ENCODE measurements at regions of chr20 and their contacts with region 1.

Region 1: DNA sequence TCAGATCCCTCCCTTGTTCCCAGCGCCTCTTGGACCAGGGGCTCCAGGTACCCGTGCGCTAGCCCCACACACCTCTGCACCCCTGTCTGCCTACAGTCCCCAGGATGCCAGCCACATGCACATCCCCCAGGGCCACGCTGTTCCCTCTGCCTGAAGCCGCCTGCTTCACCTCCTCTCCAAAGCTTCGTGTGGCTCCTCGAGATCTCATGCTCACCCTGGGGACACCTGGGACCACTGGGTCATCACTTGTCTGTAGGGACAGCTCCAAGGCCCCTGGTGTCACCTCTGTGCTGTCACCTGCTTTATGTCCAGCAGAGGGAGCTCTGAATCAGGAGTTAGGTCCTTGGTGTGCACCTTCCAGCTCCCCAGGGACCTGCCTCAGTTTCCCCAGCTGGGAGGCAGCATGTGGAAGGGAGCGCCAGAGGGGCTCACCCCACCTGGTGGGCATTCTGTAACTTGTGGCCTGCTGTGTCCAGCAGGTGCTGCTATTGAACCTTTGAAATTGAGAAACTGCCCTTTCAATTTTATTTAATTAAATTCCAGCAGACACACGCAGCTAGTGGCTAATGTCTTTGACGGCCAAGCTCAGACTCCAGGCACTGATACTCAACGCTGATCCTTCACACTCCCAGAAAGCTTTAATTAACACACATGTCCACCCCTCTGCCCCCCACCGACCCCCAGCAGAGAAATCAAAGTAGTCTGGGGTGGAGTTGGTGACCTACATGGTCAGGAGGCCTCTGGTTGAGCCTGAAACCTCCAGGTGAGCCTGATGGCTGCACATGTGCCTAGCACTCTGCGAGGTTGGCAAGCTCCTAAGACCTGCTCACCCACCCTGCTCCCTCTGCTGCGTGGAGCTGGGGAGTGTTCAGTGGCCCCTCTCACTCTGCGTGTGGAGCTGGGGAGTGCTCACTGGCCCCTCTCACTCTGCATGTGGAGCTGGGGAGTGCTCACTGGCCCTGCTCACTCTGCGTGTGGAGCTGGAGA is 7.6 kb upstream of the YTHDF1 start:
- DNase-seq: peak; percentile 85
- H3K4me3 ChIP-seq: no peak overlapping the region
- H3K4me3 Mint-ChIP-seq: no peak overlapping the region
- H3K27ac Mint-ChIP-seq: no peak overlapping the region
- H3K4me1 ChIP-seq: peaks cover 12% of the 10 kb centered on the region; the same call in 1 of the 2 replicates
- H3K4me1 Mint-ChIP-seq: peaks cover 7% of the 10 kb centered on the region
- H3K27me3 ChIP-seq: no peaks in the 10 kb centered on the region
- H3K27me3 Mint-ChIP-seq: peaks cover 3% of the 10 kb centered on the region
- CTCF ChIP-seq: peak; percentile 96 to 99

Region 2: GRCh38 chr20:62524505-62524911 is 699.0 kb before region 1 on chr20:
- CTCF ChIA-PET with region 1: no interaction called
- POLR2A ChIA-PET with region 1: interaction called, 12 read pairs
- intact Hi-C with region 1: no loop called
- DNase-seq: no peak
- H3K4me3 ChIP-seq: no peak overlapping the region
- H3K4me3 Mint-ChIP-seq: no peak overlapping the region
- H3K27ac Mint-ChIP-seq: no peak overlapping the region
- H3K4me1 ChIP-seq: peaks cover 22% of the 10 kb centered on the region
- H3K4me1 Mint-ChIP-seq: peaks cover 13% of the 10 kb centered on the region
- H3K27me3 ChIP-seq: no peaks in the 10 kb centered on the region
- H3K27me3 Mint-ChIP-seq: no peaks in the 10 kb centered on the region
- CTCF ChIP-seq: no peak

Region 3: GRCh38 chr20:63241272-63241671 is 17.8 kb after region 1 on chr20:
- CTCF ChIA-PET with region 1: interaction called, 122 read pairs
- POLR2A ChIA-PET with region 1: no interaction called
- intact Hi-C with region 1: no loop called
- DNase-seq: no peak
- H3K4me3 ChIP-seq: no peak overlapping the region
- H3K4me3 Mint-ChIP-seq: no peak overlapping the region
- H3K27ac Mint-ChIP-seq: no peak overlapping the region
- H3K4me1 ChIP-seq: peaks cover 16% of the 10 kb centered on the region
- H3K4me1 Mint-ChIP-seq: no peaks in the 10 kb centered on the region
- H3K27me3 ChIP-seq: no peaks in the 10 kb centered on the region
- H3K27me3 Mint-ChIP-seq: no peaks in the 10 kb centered on the region
- CTCF ChIP-seq: no peak

Region 4: GRCh38 chr20:63261060-63261794 is 37.7 kb after region 1 on chr20:
- CTCF ChIA-PET with region 1: interaction called, 14 read pairs
- POLR2A ChIA-PET with region 1: no interaction called
- intact Hi-C with region 1: no loop called
- DNase-seq: peak; percentile 74 to 78
- H3K4me3 ChIP-seq: no peak overlapping the region
- H3K4me3 Mint-ChIP-seq: peak overlapping the region; percentile 4
- H3K27ac Mint-ChIP-seq: peak overlapping the region; percentile 54
- H3K4me1 ChIP-seq: peaks cover 59% of the 10 kb centered on the region
- H3K4me1 Mint-ChIP-seq: peaks cover 43% of the 10 kb centered on the region
- H3K27me3 ChIP-seq: no peaks in the 10 kb centered on the region
- H3K27me3 Mint-ChIP-seq: no peaks in the 10 kb centered on the region
- CTCF ChIP-seq: no peak

Region 5: DNA sequence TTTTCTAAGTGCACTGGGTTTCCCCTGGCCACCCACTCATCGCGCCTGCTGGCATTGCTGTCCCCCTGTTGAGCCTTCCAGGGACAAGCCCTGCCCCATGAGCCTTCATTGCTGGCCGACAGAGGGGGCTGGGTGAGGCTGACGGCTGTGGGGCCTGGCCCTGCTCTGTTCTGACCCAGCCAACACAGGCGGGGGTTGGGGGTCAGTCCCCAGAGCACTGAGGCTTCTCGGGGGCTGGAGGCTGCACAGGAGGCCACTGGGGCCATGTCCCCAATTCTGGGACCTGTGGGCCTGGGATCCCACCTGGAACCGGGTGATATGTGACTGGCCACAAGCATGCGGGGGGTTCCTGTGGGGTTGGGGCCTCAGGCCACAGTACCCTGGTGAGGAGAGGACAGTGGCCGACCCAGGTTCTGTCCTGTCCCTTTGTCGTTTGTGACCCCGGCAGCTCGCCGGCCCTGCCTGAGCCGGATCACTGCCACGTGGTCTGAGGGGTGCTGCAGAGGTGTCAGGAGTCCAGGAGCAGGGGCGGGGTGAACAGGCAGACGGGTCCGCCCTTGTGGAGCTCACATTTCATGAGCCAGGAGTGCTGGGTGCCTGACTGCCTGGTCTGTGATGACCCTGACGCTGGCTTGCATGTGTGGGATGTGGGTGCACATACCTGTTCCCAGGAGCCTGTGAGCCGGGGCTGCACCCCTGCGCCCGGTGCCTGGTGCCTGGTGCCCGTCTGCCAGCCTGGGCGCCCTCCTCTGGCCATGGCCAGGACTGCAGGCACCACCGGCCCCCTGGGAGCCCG is 67.4 kb after region 1 on chr20:
- CTCF ChIA-PET with region 1: interaction called, 24 read pairs
- POLR2A ChIA-PET with region 1: no interaction called
- intact Hi-C with region 1: no loop called
- DNase-seq: peak in 1 of 2 experiments; percentile 84
- H3K4me3 ChIP-seq: no peak overlapping the region
- H3K4me3 Mint-ChIP-seq: no peak overlapping the region
- H3K27ac Mint-ChIP-seq: peak overlapping the region; percentile 48
- H3K4me1 ChIP-seq: 0 out of 2 replicates have a peak, but pooled peaks cover 5% of the 10 kb centered on the region
- H3K4me1 Mint-ChIP-seq: no peaks in the 10 kb centered on the region
- H3K27me3 ChIP-seq: no peaks in the 10 kb centered on the region
- H3K27me3 Mint-ChIP-seq: no peaks in the 10 kb centered on the region
- CTCF ChIP-seq: peak; percentile 81 to 84

Region 6: GRCh38 chr20:63381807-63382322 is 158.4 kb after region 1 on chr20:
- CTCF ChIA-PET with region 1: interaction called, 60 read pairs
- POLR2A ChIA-PET with region 1: no interaction called
- intact Hi-C with region 1: loop called (anchors 5 kb)
- DNase-seq: peak in 1 of 2 experiments; percentile 80
- H3K4me3 ChIP-seq: no peak overlapping the region
- H3K4me3 Mint-ChIP-seq: no peak overlapping the region
- H3K27ac Mint-ChIP-seq: no peak overlapping the region
- H3K4me1 ChIP-seq: no peaks in the 10 kb centered on the region
- H3K4me1 Mint-ChIP-seq: peaks cover 6% of the 10 kb centered on the region
- H3K27me3 ChIP-seq: no peaks in the 10 kb centered on the region
- H3K27me3 Mint-ChIP-seq: peaks cover 12% of the 10 kb centered on the region
- CTCF ChIP-seq: peak; percentile 100

Measured in Caco-2 (cell line).